ENCODE measurements at regions of chr21 and their contacts with region 1.

Region 1: GRCh38 chr21:44368711-44369446 is 15.5 kb downstream of the TRPM2 start:
- DNase-seq: no peak
- ATAC-seq: peak in 2 of 8 donors; percentile 30 to 40
- H3K4me3 ChIP-seq: no peak overlapping the region
- H3K27ac ChIP-seq: no peak overlapping the region
- H3K4me1 ChIP-seq: peaks cover 0 to 6% (median 0%) of the 10 kb centered on the region in 9 donors
- H3K27me3 ChIP-seq: peaks cover 0 to 58% (median 23%) of the 10 kb centered on the region in 7 donors
- CTCF ChIP-seq: no peak

Region 2: GRCh38 chr21:43572446-43572845 is 796.4 kb before region 1 on chr21:
- intact Hi-C with region 1: no loop called
- DNase-seq: no peak
- ATAC-seq: no peak
- H3K4me3 ChIP-seq: no peak overlapping the region
- H3K27ac ChIP-seq: no peak overlapping the region
- H3K4me1 ChIP-seq: peaks cover 0 to 23% (median 6%) of the 10 kb centered on the region in 9 donors
- H3K27me3 ChIP-seq: no peaks in the 10 kb centered on the region
- CTCF ChIP-seq: no peak

Region 3: DNA sequence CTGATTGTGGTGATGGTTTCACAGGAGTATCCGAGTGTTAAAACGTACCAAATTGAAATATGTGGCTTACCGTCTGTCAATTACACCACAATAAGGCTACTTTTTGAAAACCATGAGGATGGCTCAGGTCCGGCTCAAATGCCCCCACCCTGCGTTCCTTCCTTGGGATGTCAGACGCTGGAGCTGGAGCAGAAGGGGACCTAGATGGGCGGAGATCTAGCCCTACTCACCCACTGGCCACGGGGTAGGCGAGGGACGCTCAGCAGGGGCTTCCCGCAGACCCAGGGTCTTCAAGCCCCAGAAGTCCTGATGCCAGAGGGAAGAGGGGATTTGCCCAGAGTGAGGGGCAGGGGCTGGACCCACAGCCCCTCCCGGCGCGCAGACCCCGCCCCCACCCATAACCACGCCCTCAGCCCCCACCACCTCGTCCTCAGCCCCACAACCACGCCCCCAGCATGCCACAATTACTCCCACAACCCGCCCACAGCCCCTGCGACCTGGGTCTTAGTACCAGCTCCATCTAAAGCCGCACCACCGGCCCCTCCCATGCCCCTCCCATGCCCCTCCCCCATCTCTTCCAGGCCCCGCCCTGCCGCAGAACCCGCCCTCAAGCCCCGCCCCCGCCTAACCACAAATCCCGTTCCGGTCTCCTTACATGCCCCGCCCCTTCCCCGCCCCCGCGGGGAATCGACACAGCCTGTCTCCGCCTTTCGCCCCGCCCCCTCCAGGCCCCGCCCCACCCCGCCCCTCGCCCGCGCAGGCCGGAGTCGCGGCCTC is 86.1 kb after region 1 on chr21 and contains the start of gene LRRC3:
- intact Hi-C with region 1: loop called in 1 of 10 experiments (anchors 10 kb)
- DNase-seq: peak; percentile 82 to 90
- ATAC-seq: peak; percentile 85 to 88 (median 87)
- H3K4me3 ChIP-seq: peak within 1 kb of the TSS; percentile 65 to 89 (median 82)
- H3K27ac ChIP-seq: peak within 1 kb of the TSS in 5 of 10 donors; percentile 10 to 65 (median 47)
- H3K4me1 ChIP-seq: peaks cover 0 to 10% (median 6%) of the 10 kb centered on the region in 9 donors
- H3K27me3 ChIP-seq: peaks cover 0 to 13% (median 3%) of the 10 kb centered on the region in 7 donors
- CTCF ChIP-seq: no peak
- total RNA-seq, gene LRRC3: 1.2 to 3.2 (median 2.1) TPM

Region 4: GRCh38 chr21:44466351-44466954 is 97.6 kb after region 1 on chr21:
- intact Hi-C with region 1: loop called in 1 of 10 experiments (anchors 5 kb)
- DNase-seq: no peak
- ATAC-seq: no peak
- H3K4me3 ChIP-seq: no peak overlapping the region
- H3K27ac ChIP-seq: no peak overlapping the region
- H3K4me1 ChIP-seq: peaks cover 0 to 9% (median 3%) of the 10 kb centered on the region in 9 donors
- H3K27me3 ChIP-seq: no peaks in the 10 kb centered on the region
- CTCF ChIP-seq: no peak